Head of caudate nucleus (tissue), 42 donors: ENCODE measurements at regions of chr4 and their contacts with region 1.

Region 1: GRCh38 chr4:60648774-60649173 is 551.4 kb upstream of the ADGRL3 start:
- DNase-seq: no peak

Region 2: GRCh38 chr4:60506061-60506460 is 142.7 kb before region 1 on chr4:
- intact Hi-C with region 1: no loop called
- DNase-seq: no peak

Region 3: GRCh38 chr4:60757986-60758385 is 109.2 kb after region 1 on chr4:
- intact Hi-C with region 1: no loop called
- DNase-seq: no peak

Region 4: GRCh38 chr4:60780874-60781273 is 132.1 kb after region 1 on chr4:
- intact Hi-C with region 1: loop called (anchors 5 kb)
- DNase-seq: no peak